ENCODE measurements at regions of chr10 and their contacts with region 1.

Region 1: DNA sequence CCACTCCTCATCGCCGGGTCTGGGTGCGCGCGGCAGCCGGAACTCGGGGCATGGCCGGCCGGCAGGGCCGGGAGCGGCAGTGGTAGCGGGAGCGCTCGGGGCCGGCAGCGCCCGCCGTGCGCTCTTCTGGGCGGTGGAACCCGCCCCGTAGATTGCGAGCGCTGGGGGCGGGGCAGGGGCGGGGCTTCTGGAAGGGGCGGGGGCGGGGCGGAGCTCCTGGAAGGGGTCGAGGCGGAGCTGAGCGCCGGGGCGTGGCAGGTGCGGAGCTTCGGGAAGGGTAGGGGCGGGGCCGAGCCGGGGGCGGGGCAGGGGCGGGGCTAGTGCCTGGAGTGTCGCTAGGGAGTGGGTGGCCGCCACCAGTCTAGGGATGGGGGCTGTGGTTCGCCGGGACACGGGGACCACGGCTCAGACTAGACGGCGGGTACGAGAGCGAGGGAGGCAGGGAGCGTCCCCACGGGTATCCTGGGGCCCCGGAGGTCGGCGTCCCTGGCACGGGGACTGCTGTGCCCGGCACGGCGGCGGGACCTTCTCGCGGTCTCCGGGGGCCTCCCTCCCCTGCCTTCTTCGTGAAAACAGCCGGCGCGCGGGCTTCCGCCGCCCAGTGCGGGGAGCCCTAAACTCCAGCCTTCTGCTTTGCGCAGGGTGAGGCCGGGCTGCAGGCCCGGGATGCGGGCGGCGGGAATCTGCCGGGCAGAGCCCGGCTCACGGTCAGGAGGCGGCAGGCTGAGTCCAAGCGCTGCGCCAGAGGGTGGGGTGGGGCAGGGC is at the start of gene STK32C:
- DNase-seq: peak; percentile 96
- total RNA-seq, gene STK32C: 5.9 TPM

Region 2: GRCh38 chr10:132331526-132332432 is 23.8 kb after region 1 on chr10 and contains the start of gene LRRC27:
- intact Hi-C with region 1: loop called (anchors 2 kb)
- DNase-seq: peak; percentile 98
- total RNA-seq, gene LRRC27: 3.8 TPM

Measured in cardiac septum (tissue), 1 donor.